Heart right ventricle (tissue), 16 donors: ENCODE measurements at regions of chr22 and their contacts with region 1.

Region 1: DNA sequence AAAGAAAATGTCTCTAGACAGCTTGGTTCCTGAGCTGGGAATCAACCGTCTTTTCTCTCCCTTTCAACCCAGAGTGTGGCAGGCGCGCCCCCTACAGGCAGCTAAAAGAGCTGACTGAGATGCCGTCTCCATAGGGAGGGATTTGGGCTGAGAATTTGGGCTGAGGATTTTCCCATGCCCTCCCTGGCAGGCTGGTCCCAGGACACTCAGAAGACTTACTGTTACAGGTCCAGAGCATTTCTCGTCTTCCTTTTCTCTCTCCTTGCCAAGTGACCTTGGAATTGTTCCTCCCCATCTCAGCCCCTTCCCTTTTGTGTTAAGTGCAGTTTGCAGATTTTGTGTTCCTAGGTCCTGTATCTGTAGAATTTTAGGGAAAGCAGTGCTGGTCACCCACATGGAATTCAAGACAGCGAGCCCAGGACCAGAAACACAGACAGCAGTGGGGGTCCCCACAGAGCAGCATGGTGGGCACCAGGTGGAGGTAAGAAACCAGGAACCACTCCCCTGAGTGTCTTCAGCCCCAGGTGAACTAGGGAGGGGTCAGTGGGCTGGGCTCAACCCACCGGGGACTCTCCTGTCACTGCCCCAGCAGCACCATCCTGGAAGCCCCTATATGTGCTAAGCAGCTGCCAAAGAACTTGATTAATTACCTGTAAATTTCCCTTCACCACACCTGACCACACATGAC is 9.9 kb upstream of the IGLL5 start:
- DNase-seq: peak; percentile 59 to 67
- ATAC-seq: peak in 2 of 8 donors; percentile 31 to 35
- H3K4me3 ChIP-seq: no peak overlapping the region
- H3K27ac ChIP-seq: no peak overlapping the region
- H3K4me1 ChIP-seq: no peaks in the 10 kb centered on the region
- H3K27me3 ChIP-seq: peaks cover 0 to 23% (median 8%) of the 10 kb centered on the region in 7 donors
- CTCF ChIP-seq: peak; percentile 36 to 75 (median 70)

Region 2: DNA sequence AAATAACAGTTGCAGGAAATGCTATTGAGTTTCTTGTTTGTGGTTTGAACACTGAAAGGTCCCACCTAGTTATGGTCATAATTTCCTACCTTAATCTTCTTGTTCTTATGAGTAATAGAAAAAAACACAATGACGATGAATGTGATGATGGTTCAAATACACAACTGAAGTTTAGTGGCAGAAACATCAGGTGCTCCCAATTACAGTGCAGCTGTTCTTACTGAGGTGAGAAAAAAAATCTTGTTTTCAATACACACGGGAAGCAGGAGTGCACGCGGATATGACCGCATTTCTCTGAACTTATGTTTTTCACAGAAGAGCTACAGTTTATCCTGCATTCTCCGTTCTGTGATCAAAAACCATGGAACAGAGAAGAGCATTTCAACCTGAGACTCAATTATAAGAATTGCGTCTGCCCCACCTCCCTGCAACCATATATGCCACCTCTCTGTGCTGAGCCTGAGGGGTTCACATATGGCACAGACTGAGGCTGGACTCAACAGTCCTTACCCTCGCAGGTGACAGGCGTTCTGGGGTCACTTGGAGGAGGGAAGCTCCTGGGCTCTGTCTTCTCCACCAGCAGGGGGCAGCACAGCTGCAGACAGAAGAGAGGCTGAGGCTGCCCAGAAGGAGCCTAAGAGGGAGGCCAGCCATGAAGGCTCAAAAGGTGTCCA is 89.7 kb before region 1 on chr22:
- intact Hi-C with region 1: no loop called
- DNase-seq: peak in 1 of 2 donors; percentile 48
- ATAC-seq: peak in 4 of 8 donors; percentile 46 to 62 (median 58)
- H3K4me3 ChIP-seq: no peak overlapping the region
- H3K27ac ChIP-seq: peak overlapping the region in 1 of 10 donors; percentile 77
- H3K4me1 ChIP-seq: peaks cover 0 to 11% (median 0%) of the 10 kb centered on the region in 9 donors
- H3K27me3 ChIP-seq: peaks cover 0 to 40% (median 29%) of the 10 kb centered on the region in 7 donors
- CTCF ChIP-seq: peak; percentile 30 to 89 (median 63)

Region 3: GRCh38 chr22:22802339-22802970 is 75.2 kb before region 1 on chr22:
- intact Hi-C with region 1: loop called in 4 of 10 experiments (anchors 5 to 10 kb)
- DNase-seq: no peak
- ATAC-seq: no peak
- H3K4me3 ChIP-seq: no peak overlapping the region
- H3K27ac ChIP-seq: no peak overlapping the region
- H3K4me1 ChIP-seq: no peaks in the 10 kb centered on the region
- H3K27me3 ChIP-seq: peaks cover 0 to 61% (median 27%) of the 10 kb centered on the region in 7 donors
- CTCF ChIP-seq: peak in 3 of 9 donors; percentile 40 to 49 (median 44)

Region 4: GRCh38 chr22:22810018-22810427 is 67.6 kb before region 1 on chr22:
- intact Hi-C with region 1: loop called in 4 of 10 experiments (anchors 5 to 10 kb)
- DNase-seq: peak in 1 of 2 donors; percentile 40
- ATAC-seq: peak in 6 of 8 donors; percentile 46 to 74 (median 70)
- H3K4me3 ChIP-seq: no peak overlapping the region
- H3K27ac ChIP-seq: no peak overlapping the region
- H3K4me1 ChIP-seq: no peaks in the 10 kb centered on the region
- H3K27me3 ChIP-seq: peaks cover 0 to 33% (median 5%) of the 10 kb centered on the region in 7 donors
- CTCF ChIP-seq: peak in 8 of 9 donors; percentile 31 to 86 (median 74)